AG04450 (cell line): ENCODE measurements at regions of chr5 and their contacts with region 1.

Region 1: GRCh38 chr5:177113566-177114424 is 19.8 kb upstream of the NSD1 start:
- DNase-seq: no peak
- H3K4me3 ChIP-seq: no peak overlapping the region
- H3K27ac ChIP-seq: no peak overlapping the region
- H3K27me3 ChIP-seq: no peaks in the 10 kb centered on the region
- CTCF ChIP-seq: peak; percentile 100

Region 2: DNA sequence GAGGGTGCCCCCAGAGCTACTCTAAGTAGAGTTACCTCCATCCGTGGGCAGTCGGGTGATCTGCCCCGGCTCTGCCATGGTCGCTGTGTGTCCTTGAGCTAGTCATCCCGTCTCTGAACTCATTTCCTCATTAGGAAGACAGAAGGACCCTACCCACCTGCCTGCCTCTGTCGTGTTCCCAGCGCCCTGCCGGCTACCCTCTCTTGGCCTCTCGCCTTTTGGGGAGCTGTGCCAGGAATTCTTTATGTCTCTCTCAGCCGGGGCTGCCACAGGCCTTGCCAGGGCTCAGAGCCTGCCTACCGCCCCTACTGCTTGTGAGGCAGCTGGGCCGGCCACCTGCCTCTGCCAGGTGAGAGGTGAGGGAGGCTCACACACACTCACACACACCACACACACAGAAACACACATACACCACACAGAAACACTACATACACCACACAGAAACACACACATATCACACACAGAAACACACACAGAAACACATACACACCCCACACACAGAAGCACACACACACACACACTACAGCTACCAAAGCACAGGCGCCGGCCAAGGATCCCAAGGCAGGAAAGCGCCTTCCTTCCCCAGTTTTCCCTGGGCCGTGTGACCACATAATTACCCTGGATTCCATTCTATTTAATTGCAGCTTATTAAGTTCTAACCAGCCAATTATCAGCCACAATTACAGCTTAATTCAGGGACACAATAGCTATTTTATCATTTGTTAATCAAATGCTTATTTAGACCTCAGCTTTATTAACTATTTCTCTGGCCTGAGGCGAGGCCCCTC is 261.7 kb before region 1 on chr5:
- CTCF ChIA-PET with region 1: no interaction called
- POLR2A ChIA-PET with region 1: no interaction called
- DNase-seq: no peak
- H3K4me3 ChIP-seq: no peak overlapping the region
- H3K27ac ChIP-seq: no peak overlapping the region
- H3K27me3 ChIP-seq: peaks cover 40% of the 10 kb centered on the region
- CTCF ChIP-seq: no peak

Region 3: DNA sequence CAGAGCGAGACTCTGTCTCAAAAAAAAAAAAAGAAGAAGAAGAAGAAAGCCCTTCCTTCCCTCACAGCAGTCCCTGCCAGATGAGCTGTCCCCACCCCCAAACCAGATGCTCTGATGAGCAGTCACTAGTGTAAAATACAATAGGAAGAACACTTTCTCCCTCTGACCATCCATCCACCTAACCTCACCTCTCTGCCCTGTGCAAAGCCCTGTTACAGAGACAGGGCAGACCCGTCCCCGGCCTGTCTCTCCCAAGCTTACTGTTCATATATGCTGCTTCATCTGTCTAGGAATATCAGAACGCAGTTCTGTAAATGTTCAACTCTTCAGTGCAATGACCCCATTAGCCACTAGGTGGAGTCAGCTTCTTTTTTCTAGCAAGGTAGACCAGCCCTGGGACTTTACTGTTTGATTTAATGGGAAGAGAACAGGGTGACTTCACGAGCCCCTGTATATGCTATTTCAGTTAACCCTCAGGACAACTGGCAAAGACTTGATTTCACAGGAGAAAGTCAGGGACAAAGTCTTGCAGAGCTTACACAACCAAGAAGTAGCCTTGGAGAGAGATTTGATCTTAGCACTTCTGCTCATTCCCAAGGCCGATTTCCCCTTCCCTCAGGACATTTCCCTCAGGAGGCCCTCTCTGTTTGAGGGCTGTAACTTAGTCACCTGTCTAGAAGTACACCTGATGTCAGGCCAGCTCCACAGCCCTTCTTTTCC is 42.0 kb before region 1 on chr5:
- CTCF ChIA-PET with region 1: interaction called, 259 read pairs
- POLR2A ChIA-PET with region 1: interaction called, 3 read pairs
- DNase-seq: peak; percentile 69
- H3K4me3 ChIP-seq: no peak overlapping the region
- H3K27ac ChIP-seq: no peak overlapping the region
- H3K27me3 ChIP-seq: no peaks in the 10 kb centered on the region
- CTCF ChIP-seq: peak; percentile 95

Region 4: GRCh38 chr5:177098470-177099141 is 15.2 kb before region 1 on chr5:
- CTCF ChIA-PET with region 1: interaction called, 34 read pairs
- POLR2A ChIA-PET with region 1: interaction called, 4 read pairs
- DNase-seq: no peak
- H3K4me3 ChIP-seq: no peak overlapping the region
- H3K27ac ChIP-seq: peak overlapping the region; percentile 84
- H3K27me3 ChIP-seq: peaks cover under 1% of the 10 kb centered on the region
- CTCF ChIP-seq: no peak

Region 5: DNA sequence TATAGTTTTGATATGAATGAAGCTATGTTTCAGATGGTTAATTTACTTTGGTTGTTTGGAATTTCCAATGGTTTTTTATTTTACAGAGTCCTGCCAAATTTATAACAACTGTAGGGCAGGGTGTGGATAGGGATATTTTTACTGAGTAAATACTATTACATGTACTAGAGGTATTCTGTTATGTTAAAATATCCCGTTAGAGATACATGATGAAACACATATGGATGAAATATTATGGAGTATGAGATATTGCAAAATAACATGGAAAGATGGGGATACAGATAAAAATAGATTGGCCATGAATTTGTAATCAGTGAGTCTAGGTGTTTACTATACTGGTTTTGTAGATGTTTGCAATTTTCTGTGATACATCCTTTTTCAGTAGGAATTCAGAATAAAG is 113.1 kb after region 1 on chr5:
- CTCF ChIA-PET with region 1: no interaction called
- POLR2A ChIA-PET with region 1: no interaction called
- DNase-seq: no peak
- H3K4me3 ChIP-seq: no peak overlapping the region
- H3K27ac ChIP-seq: no peak overlapping the region
- H3K27me3 ChIP-seq: no peaks in the 10 kb centered on the region
- CTCF ChIP-seq: no peak

Region 6: DNA sequence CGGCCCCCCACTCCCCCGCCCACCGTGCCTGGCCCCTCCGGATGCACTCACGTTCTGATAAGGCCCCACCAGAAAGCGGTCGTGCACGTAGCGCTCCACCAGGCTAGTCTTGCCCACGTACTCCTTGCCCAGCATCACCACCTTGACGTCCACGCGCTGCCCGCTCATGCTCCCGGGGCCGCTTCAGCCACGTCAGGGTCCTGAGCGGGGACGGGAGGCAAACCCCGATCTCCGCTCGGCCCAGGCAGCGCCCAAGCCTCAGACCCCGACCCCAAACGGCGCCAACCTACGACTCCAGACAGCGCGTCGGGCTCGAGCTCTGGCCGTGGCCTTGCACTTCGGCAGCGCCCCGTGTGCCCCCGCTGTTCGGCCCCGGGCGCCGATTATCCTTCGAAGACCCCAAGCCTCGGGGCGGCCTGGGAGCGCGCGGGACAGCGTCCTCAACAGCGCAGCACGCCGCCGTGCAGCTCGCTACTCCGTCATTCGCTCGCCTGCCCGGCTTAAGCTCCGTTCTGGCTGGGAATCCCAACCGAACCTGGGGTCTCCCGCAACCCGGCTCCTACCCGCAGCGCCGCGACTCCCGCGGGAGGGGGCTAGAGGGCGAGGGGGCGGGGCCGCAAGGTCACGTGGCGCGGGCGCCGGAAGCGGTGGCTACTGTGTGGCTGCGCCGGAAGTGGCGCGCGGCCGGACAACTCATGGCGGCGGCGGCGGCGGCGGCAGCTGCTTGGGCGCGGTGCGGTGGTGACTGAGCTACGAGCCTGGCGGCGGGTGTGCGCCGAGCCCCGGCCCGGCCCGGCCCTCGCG is 189.5 kb after region 1 on chr5 and contains the starts of genes PRELID1 and RAB24:
- CTCF ChIA-PET with region 1: interaction called, 35 read pairs
- POLR2A ChIA-PET with region 1: no interaction called
- DNase-seq: peak; percentile 46
- H3K4me3 ChIP-seq: peak within 1 kb of the TSS; percentile 89
- H3K27ac ChIP-seq: peak within 1 kb of the TSS; percentile 47
- H3K27me3 ChIP-seq: no peaks in the 10 kb centered on the region
- CTCF ChIP-seq: peak; percentile 36
- polyA plus RNA-seq, gene PRELID1: 135 and 158 TPM in 2 replicates
- polyA plus RNA-seq, gene RAB24: 35.4 and 38.8 TPM in 2 replicates

Region 7: DNA sequence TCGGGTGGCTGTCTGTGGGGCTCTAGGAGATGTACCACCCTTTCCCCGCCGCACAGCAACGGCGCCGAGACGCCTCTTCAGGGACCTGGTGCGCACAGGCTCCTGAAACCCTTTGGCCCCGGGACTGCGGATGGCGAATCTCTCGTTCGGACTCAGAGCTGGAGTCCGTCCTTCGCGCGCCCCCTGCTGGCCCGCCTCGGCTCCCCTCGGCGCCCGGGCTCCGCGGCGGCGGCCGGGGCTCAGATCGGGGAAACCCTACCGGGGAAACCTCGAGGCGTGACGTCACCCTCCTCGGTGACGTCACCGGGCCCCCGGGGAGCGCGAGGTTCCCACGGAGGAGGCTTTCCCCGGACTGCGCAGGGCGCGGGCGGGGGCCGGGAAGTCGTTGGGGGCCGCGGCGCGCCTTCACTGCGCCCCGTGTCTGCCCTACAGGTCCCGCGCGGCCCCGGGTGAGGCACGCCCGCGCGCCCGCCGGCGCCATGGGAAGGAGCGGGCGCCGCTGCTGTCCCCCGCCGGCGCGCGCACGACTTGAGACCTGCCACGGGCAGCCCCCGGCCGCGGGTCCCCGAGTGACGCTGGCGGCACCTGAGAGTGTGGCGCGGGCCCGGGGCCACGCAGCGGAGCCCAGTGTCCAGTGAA is 340.7 kb after region 1 on chr5:
- CTCF ChIA-PET with region 1: interaction called, 10 read pairs
- POLR2A ChIA-PET with region 1: no interaction called
- DNase-seq: no peak
- H3K4me3 ChIP-seq: peak overlapping the region; percentile 51
- H3K27ac ChIP-seq: peak overlapping the region; percentile 11
- H3K27me3 ChIP-seq: no peaks in the 10 kb centered on the region
- CTCF ChIP-seq: peak; percentile 77

Region 8: GRCh38 chr5:177516604-177517568 is 403.1 kb after region 1 on chr5 and contains the start of gene DDX41:
- CTCF ChIA-PET with region 1: no interaction called
- POLR2A ChIA-PET with region 1: no interaction called
- DNase-seq: peak; percentile 98
- H3K4me3 ChIP-seq: peak within 1 kb of the TSS; percentile 97
- H3K27ac ChIP-seq: peak within 1 kb of the TSS; percentile 85
- H3K27me3 ChIP-seq: no peaks in the 10 kb centered on the region
- CTCF ChIP-seq: 0 out of 2 replicates have a peak, but pooled peaks have one; percentile 11
- polyA plus RNA-seq, gene DDX41: 71.8 and 96.0 TPM in 2 replicates